ENCODE measurements at regions of chr15 and their contacts with region 1.

Region 1: DNA sequence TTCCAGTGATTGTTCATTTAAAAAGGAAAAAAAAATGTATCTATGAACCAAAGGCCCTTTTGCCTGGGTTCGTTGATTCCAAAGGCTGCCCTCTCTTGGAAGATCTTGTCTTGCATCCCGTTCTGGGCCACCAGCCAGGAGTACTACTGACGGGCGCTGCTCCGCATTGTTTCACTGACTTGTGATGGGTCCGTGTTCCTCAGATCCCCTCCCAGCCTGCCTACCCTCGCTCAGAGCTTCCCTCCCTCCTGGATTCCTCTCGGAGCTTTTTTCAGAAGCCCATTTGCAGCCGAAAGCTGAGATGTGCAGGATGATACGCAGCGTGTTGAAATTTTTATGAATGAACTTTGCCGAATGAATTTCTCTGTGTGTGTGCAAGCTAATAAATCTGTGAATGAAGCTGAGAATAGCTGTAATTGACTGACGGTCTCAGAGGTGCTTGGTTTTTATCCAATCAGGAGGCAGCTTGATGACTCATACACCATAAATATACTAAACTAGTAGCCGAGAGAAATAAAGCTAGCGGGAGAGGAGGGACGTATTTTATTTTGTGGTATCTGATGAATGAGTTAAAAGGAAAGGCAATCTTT is at the start of gene SHC4:
- DNase-seq: peak; percentile 60 to 84 (median 80)
- H3K4me3 ChIP-seq: peak within 1 kb of the TSS; percentile 30 to 90 (median 69)
- H3K27ac ChIP-seq: peak within 1 kb of the TSS in 26 of 59 donors; percentile 7 to 75 (median 36)
- H3K27me3 ChIP-seq: no peaks in the 10 kb centered on the region
- CTCF ChIP-seq: peak in 51 of 56 donors; percentile 10 to 68 (median 43)
- total RNA-seq, gene SHC4: 4.1 to 69.2 (median 16.4) TPM

Region 2: DNA sequence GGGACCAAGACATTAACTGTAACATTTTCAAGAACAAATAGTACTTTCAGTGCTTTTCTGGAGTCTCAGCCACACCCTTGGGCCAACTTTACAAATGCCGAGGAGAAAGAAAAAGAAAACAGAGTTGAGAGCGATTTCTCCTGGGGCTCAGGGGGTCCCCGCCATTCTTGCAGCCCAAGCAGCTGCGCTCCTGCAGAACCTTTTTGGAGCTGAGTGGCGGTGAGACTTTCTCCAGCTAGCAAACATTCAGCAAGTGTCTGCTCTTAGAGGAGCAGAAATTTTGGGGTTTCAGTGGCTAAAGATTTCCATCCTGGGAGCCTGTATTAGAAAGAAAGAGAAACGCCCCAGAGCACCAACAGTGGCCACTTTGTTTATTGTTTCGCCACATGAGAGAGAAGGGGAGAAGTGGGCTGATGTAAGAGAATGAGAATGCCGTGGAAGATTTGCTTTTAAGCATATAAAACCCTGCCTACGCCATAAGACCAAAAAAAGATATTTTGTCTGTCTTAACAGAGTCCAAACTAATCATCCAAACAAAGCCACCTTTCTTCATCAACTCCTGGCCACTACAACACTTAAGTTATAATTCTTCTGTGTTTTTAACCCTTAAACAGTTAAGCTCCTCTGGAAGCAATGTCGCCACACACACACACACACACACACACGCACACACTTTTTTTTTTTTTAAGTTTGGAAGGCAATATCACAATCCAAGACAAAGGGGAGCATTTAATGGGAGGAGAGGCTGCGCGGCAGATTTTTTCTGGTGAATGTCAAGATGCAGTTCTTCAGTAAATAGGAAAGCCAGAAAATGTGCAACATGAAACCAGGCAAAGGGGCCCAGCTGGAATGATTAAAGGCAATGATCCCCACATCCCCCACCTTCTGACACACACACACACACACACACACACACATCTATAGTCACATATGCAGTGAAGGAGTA is 66.5 kb before region 1 on chr15:
- intact Hi-C with region 1: loop called in 1 of 2 experiments (anchors 5 kb)
- DNase-seq: peak in 1 of 10 donors; percentile 31
- H3K4me3 ChIP-seq: peak overlapping the region in 58 of 59 donors; percentile 4 to 70 (median 50)
- H3K27ac ChIP-seq: peak overlapping the region; percentile 26 to 96 (median 86)
- H3K27me3 ChIP-seq: no peaks in the 10 kb centered on the region
- CTCF ChIP-seq: peak in 4 of 56 donors; percentile 6 to 31 (median 13)

Region 3: DNA sequence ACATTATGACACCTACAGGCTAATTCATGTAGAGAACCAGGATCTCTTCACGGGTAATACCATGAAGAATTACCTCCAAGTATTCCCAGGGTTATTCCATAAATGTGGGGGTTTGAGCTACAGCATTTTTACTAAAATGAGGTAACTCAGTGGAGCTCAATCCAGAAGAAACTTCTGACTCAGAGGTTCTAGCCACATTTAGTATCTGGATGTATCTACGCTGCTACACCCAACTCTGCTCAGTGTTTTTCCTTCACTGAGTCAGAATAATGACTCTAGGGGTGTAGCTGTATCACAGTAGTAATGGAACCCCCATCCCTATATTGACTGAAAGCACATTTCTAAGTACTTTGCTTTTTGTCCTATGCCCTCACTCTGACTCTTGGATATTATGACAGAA is 139.4 kb after region 1 on chr15:
- intact Hi-C with region 1: no loop called
- DNase-seq: no peak
- H3K4me3 ChIP-seq: no peak overlapping the region
- H3K27ac ChIP-seq: no peak overlapping the region
- H3K27me3 ChIP-seq: no peaks in the 10 kb centered on the region
- CTCF ChIP-seq: no peak